ENCODE measurements at regions of chr10 and their contacts with region 1.

Region 1: DNA sequence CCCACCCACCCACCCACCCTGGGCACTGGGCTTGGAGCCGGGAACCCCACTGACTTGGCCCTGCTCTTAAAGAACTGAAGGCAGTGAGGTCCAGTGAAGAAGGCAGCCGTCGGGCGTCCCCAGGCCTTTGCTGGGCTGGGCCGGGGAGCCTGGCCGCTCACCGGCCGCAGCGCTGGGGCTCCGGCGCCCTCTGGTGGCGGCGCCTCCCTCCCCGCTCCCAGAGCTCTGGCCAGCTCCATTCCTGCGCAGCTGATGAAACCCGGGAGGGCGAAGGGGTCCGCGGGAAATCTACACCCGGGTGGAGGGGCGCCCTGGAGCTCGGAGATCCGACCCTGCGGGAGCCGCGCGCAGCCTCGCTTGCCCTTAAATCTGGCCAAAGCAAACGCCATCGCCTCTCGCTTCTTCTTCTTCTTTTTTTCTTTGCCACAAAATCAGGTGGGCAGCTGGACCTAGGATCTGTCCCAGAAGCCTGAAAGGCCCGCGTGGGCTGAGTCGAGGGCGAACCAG is 1.7 kb upstream of the CXCL12 start:
- DNase-seq: peak; percentile 73
- ATAC-seq: peak; percentile 90
- H3K4me3 ChIP-seq: no peak overlapping the region
- H3K27ac ChIP-seq: no peak overlapping the region
- H3K4me1 ChIP-seq: no peaks in the 10 kb centered on the region
- H3K27me3 ChIP-seq: peaks cover 44% of the 10 kb centered on the region
- CTCF ChIP-seq: peak; percentile 87

Region 2: DNA sequence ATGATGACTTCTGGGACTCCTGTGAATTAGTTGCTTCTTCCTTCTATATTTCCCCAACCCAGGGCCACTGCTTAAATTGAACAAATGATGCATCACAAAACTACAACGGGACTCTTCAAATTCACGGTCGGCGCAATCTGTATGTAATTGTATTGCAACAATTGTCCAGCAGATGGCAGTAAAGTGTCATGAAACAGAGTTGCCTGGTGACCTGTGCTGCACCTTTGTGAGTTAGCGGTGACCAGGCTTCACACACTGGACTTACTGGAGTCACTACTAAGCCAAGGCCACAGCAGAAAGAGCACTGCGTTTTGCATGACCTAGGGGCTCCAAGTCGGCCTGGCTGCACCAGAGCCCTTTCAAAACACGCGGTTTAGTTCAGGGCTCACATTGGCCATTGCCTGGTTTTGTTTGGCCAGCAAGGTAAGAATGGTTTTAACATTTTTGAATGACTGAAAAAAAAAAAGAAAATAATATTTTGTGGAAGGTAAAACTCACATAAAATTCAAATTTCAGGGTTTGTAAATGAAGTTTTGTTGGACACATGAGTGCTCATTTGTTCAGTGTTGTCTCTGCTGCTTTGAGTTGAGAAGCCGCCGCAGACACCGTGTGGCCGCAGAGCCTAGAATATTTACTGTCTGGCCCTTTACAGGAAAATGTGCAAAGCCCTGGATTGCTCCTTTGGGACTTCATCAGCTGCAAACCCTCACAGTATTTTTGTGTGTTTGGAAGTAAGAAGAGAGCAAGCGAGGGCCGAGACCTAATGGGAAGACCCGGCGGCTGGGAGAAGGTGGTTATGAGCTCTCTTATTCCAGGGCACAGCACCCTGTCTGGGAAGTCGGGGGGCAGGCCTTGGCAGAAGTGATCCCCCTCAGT is 714.7 kb before region 1 on chr10:
- CTCF ChIA-PET with region 1: interaction called, 3 read pairs
- POLR2A ChIA-PET with region 1: interaction called, 3 read pairs
- intact Hi-C with region 1: loop called (anchors 1 kb)
- DNase-seq: peak; percentile 88
- ATAC-seq: peak; percentile 90
- H3K4me3 ChIP-seq: no peak overlapping the region
- H3K27ac ChIP-seq: no peak overlapping the region
- H3K4me1 ChIP-seq: no peaks in the 10 kb centered on the region
- H3K27me3 ChIP-seq: peaks cover 26% of the 10 kb centered on the region
- CTCF ChIP-seq: peak; percentile 96

Region 3: DNA sequence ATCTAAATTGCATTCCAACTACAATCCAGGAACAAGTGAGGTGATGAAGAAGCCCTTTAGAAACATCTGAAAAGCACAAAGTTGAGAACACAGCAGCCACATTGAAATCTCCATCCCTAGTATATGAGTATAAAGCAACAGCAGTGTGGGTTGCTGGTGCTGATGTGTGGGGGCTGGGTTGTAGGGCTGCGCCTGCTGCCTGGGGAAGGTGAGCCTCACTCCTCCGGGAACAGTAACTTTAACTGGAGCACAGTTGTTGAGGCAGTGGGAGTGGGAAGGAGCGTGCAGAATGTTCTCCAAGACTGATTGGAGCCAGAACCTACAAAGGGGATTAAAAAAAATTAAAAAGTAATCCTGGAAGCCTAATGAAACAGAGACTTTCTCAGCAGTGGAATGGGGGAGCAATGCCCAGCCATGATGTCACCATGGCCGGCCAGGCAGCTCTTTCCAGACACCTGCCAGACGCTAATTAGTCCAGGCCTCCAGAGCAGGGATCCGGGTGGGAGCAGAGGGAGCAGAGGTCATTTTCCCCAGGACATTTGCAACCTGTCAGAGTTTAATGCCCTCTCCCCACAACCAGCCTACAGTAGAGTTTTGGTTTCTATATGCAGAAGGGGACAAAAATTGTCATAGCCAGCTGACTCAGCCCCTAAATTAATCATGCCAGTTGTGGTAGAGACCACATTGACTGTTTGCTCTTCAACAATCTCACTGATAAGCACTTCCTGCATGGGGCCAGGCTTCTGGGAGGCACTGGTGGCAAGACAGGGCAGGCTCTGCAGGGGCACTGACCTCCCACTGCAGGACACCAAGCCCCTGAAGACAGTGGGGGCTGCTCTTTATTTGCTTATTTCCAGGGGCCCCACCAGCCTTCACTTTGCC is 604.9 kb before region 1 on chr10:
- CTCF ChIA-PET with region 1: no interaction called
- POLR2A ChIA-PET with region 1: no interaction called
- intact Hi-C with region 1: loop called (anchors 5 kb)
- DNase-seq: peak; percentile 30
- ATAC-seq: peak; percentile 42; the same call in 1 of the 2 replicates
- H3K4me3 ChIP-seq: no peak overlapping the region
- H3K27ac ChIP-seq: no peak overlapping the region
- H3K4me1 ChIP-seq: no peaks in the 10 kb centered on the region
- H3K27me3 ChIP-seq: no peaks in the 10 kb centered on the region
- CTCF ChIP-seq: no peak

Region 4: DNA sequence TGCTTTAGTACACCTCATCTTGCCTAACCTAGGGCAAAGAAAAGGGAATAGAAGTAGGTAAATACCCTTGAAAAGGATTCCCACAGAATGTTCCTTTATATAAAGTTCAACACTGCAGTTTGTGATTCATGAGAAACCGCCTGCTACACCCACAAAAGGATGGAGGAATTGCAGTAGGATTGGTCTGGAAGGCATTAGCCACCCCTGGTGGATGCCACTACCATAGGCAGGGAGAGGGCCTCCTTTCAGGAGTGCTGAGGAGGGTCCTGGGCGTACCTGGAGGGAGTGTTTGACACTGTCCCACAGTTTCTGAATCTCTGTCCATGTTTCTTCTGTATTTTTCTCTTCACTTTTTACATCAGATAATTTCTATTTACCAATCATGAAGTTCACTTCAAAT is 302.8 kb after region 1 on chr10:
- CTCF ChIA-PET with region 1: no interaction called
- POLR2A ChIA-PET with region 1: no interaction called
- intact Hi-C with region 1: no loop called
- DNase-seq: peak; percentile 34
- ATAC-seq: no peak
- H3K4me3 ChIP-seq: no peak overlapping the region
- H3K27ac ChIP-seq: no peak overlapping the region
- H3K4me1 ChIP-seq: no peaks in the 10 kb centered on the region
- H3K27me3 ChIP-seq: no peaks in the 10 kb centered on the region
- CTCF ChIP-seq: peak; percentile 50

Region 5: GRCh38 chr10:44864637-44865288 is 478.2 kb after region 1 on chr10:
- CTCF ChIA-PET with region 1: no interaction called
- POLR2A ChIA-PET with region 1: no interaction called
- intact Hi-C with region 1: loop called (anchors 10 kb)
- DNase-seq: peak; percentile 95
- ATAC-seq: peak; percentile 97
- H3K4me3 ChIP-seq: peak overlapping the region; percentile 63
- H3K27ac ChIP-seq: no peak overlapping the region
- H3K4me1 ChIP-seq: peaks cover 24% of the 10 kb centered on the region
- H3K27me3 ChIP-seq: peaks cover 15% of the 10 kb centered on the region
- CTCF ChIP-seq: peak; percentile 99

Measured in PC-3 (cell line).